ENCODE measurements at regions of chr4 and their contacts with region 1.

Region 1: DNA sequence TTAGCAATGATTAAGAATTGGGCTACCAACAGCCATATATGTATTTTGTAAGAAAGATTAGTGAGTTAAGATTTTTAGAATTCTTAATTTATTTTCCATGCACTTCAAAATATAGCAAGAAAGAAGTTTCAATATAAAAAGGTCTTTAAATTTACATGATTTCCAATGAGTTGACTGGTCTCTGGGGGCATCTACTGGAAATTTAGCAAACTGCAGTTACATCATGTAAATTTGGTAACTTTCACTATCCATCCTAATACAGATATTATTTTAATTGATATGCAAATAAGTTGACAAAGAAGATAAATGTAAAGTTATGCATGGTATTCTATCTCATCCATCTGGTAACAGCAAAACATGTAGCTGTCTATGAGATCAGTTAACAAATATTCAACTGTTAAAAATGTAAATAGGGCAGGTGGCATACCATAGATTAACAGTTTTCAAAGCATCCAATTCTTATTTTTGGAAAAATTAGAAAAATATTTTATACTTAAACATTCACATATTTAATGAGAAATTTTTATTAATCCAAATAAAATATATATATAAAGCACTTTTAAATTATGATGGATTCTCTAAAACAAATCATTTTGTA is 29.1 kb downstream of the TTC29 start:
- DNase-seq: peak in 11 of 42 donors; percentile 5 to 50 (median 32)

Region 2: GRCh38 chr4:146159384-146160058 is 757.1 kb before region 1 on chr4:
- intact Hi-C with region 1: no loop called
- DNase-seq: no peak

Region 3: GRCh38 chr4:146342600-146343192 is 573.9 kb before region 1 on chr4:
- intact Hi-C with region 1: loop called (anchors 10 kb)
- DNase-seq: peak in 15 of 42 donors; percentile 3 to 64 (median 24)

Region 4: GRCh38 chr4:147182041-147182440 is 265.5 kb after region 1 on chr4:
- intact Hi-C with region 1: no loop called
- DNase-seq: no peak

Region 5: GRCh38 chr4:147334478-147334877 is 417.9 kb after region 1 on chr4:
- intact Hi-C with region 1: no loop called
- DNase-seq: no peak